ENCODE measurements at regions of chr4 and their contacts with region 1.

Region 1: GRCh38 chr4:156475322-156475721 is 496.3 kb downstream of the PDGFC start:
- DNase-seq: peak; percentile 64
- H3K4me3 ChIP-seq: no peak overlapping the region
- H3K27ac ChIP-seq: peak overlapping the region; percentile 86
- H3K4me1 ChIP-seq: peaks cover 17% of the 10 kb centered on the region
- H3K27me3 ChIP-seq: no peaks in the 10 kb centered on the region
- CTCF ChIP-seq: peak; percentile 62 to 66

Region 2: DNA sequence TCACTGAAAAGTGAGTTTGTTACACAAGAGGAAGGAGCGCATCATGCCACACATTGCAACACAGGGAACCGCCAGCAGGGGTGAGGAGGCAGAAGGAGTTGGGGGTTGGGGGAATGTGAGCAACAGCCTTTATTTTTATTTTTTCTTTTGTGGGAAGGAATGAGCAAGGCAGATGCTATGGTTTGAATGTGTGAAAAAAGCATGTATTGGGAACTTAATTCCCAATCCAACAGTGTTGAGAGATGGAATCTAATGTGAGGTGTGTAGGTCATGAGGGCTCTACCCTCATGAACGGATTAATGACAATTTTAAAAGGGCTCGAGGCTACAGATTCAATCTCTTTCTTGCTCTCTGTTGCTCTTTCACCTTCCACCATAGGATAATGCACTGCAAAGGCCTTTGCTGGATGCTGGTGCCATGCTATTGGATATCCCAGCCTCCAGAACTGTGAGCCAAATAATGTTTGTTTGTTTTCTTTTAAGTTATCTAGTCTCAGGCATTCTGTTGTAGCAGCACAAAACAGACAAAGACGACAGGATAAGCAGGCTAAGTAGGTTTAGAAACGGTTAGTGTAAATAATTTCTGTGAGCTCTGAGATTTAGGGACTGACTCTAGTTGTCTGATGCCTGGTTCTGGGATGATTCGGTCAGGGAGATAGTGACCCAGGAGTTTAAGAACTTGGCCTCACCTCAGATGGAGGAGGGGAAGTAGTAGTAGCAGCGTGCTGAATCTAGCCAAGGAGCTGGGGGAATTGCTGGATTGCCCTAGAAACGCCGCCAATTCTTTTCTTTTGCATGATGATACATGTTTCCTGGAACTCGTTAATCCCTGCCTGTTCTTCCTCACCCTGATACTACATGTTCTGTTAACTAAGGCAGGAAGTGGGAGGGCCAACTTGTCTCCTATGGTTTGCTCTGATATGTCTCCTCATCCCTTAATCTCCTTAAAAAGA is 365.1 kb before region 1 on chr4:
- CTCF ChIA-PET with region 1: no interaction called
- dilution Hi-C with region 1: no loop called
- in situ Hi-C with region 1: no loop called
- intact Hi-C with region 1: loop called (anchors 5 kb)
- DNase-seq: peak; percentile 83
- H3K4me3 ChIP-seq: no peak overlapping the region
- H3K27ac ChIP-seq: peak overlapping the region; percentile 90
- H3K4me1 ChIP-seq: peaks cover 24% of the 10 kb centered on the region
- H3K27me3 ChIP-seq: no peaks in the 10 kb centered on the region
- CTCF ChIP-seq: peak; percentile 48 to 61

Region 3: GRCh38 chr4:156677131-156677531 is 201.8 kb after region 1 on chr4:
- CTCF ChIA-PET with region 1: no interaction called
- dilution Hi-C with region 1: no loop called
- in situ Hi-C with region 1: no loop called
- intact Hi-C with region 1: loop called (anchors 1 kb)
- DNase-seq: no peak
- H3K4me3 ChIP-seq: no peak overlapping the region
- H3K27ac ChIP-seq: no peak overlapping the region
- H3K4me1 ChIP-seq: peaks cover 4% of the 10 kb centered on the region
- H3K27me3 ChIP-seq: no peaks in the 10 kb centered on the region
- CTCF ChIP-seq: peak in 1 of 2 donors; percentile 31

Region 4: GRCh38 chr4:156931267-156931666 is 455.9 kb after region 1 on chr4:
- CTCF ChIA-PET with region 1: no interaction called
- dilution Hi-C with region 1: no loop called
- in situ Hi-C with region 1: no loop called
- intact Hi-C with region 1: loop called (anchors 1 kb)
- DNase-seq: peak; percentile 93
- H3K4me3 ChIP-seq: no peak overlapping the region
- H3K27ac ChIP-seq: peak overlapping the region; percentile 97
- H3K4me1 ChIP-seq: peaks cover 46% of the 10 kb centered on the region
- H3K27me3 ChIP-seq: no peaks in the 10 kb centered on the region
- CTCF ChIP-seq: no peak

Region 5: DNA sequence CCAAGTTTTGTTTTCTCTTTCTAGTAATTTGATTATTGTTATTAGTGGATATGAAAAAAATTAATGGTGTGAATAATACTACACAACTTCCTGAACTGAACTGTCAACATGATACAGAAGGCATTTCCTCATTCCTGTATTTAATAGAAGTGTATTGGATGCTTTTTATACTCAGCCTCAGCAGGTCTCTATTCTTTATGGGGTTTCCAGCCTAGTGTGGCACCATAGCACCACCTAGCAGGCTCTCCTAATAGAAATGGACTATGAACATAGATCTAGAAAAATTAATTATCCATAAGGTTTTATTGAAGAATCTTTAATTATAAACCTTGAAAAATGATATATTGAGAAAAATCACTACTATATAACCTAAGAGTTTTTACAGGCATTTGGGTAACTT is 653.1 kb after region 1 on chr4:
- CTCF ChIA-PET with region 1: no interaction called
- dilution Hi-C with region 1: no loop called
- in situ Hi-C with region 1: no loop called
- intact Hi-C with region 1: loop called (anchors 1 kb)
- DNase-seq: peak; percentile 36
- H3K4me3 ChIP-seq: no peak overlapping the region
- H3K27ac ChIP-seq: no peak overlapping the region
- H3K4me1 ChIP-seq: no peaks in the 10 kb centered on the region
- H3K27me3 ChIP-seq: no peaks in the 10 kb centered on the region
- CTCF ChIP-seq: peak; percentile 39 to 68

Region 6: GRCh38 chr4:157978680-157979361 is 1503.5 kb after region 1 on chr4:
- CTCF ChIA-PET with region 1: no interaction called
- dilution Hi-C with region 1: no loop called
- in situ Hi-C with region 1: no loop called
- intact Hi-C with region 1: loop called (anchors 2 kb)
- DNase-seq: peak; percentile 44
- H3K4me3 ChIP-seq: no peak overlapping the region
- H3K27ac ChIP-seq: no peak overlapping the region
- H3K4me1 ChIP-seq: no peaks in the 10 kb centered on the region
- H3K27me3 ChIP-seq: peaks cover 2% of the 10 kb centered on the region
- CTCF ChIP-seq: peak; percentile 81 to 85